ENCODE measurements at regions of chr15 and their contacts with region 1.

Region 1: GRCh38 chr15:25693321-25694237 is 169.5 kb downstream of the ATP10A start:
- DNase-seq: peak; percentile 31 to 46 (median 44)
- ATAC-seq: peak; percentile 91
- H3K4me3 ChIP-seq: no peak overlapping the region
- H3K27ac ChIP-seq: no peak overlapping the region
- H3K4me1 ChIP-seq: no peaks in the 10 kb centered on the region
- H3K27me3 ChIP-seq: peaks cover 0 to 39% of the 10 kb centered on the region in 2 experiments; a peak in 2 of 5 replicates
- CTCF ChIP-seq: peak; percentile 65 to 79 (median 65)
- EP300 ChIP-seq: no peak
- POLR2A ChIP-seq: no peak
- RAD21 ChIP-seq: peak; percentile 33 to 40

Region 2: GRCh38 chr15:25727867-25728600 is 34.5 kb after region 1 on chr15:
- CTCF ChIA-PET with region 1: no interaction called
- POLR2A ChIA-PET with region 1: no interaction called
- in situ Hi-C with region 1: no loop called
- intact Hi-C with region 1: no loop called
- DNase-seq: no peak
- ATAC-seq: no peak
- H3K4me3 ChIP-seq: no peak overlapping the region
- H3K27ac ChIP-seq: no peak overlapping the region
- H3K4me1 ChIP-seq: no peaks in the 10 kb centered on the region
- H3K27me3 ChIP-seq: peaks cover 4 to 22% of the 10 kb centered on the region in 2 experiments; a peak in 4 of 5 replicates
- CTCF ChIP-seq: no peak
- EP300 ChIP-seq: no peak
- POLR2A ChIP-seq: no peak
- RAD21 ChIP-seq: no peak

Region 3: DNA sequence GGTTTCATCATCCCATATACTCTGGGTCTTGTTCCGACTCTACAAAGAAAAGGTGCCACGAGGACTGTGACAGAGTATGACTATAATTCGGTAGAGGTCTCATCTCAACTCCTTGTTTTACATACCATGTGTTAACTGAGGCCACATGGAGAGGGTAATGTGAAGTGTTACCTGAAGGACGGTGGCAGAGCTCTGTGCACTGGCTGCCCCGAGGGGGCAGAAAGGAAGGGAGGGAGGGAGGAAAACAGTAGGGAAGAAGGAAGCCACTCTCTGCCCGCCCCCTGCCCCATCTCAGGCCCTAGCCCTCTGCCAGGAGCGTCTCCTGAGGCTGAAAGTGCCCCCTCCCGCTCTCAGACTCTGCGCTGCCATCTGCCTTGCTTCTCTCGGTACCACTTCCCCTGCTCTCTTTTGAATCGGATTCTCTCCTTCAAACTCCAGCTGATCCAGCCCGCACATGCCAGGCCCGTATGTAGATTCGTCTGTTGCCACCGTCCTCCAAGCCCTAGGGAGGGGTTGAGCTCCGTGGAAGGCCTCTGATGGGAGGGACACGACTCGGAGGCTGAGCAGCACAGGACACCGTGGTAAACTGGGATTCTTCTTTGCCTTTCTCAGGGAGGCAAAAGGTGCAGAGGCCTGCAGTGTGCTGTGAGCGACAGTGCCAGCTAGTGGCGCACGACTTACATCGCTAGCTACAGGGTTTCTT is 240.0 kb after region 1 on chr15:
- CTCF ChIA-PET with region 1: no interaction called
- POLR2A ChIA-PET with region 1: no interaction called
- in situ Hi-C with region 1: no loop called
- intact Hi-C with region 1: loop called (anchors 10 kb)
- DNase-seq: peak in 2 of 4 experiments; percentile 35 to 42
- ATAC-seq: peak; percentile 94
- H3K4me3 ChIP-seq: no peak overlapping the region
- H3K27ac ChIP-seq: no peak overlapping the region
- H3K4me1 ChIP-seq: no peaks in the 10 kb centered on the region
- H3K27me3 ChIP-seq: peaks cover 0 to 10% of the 10 kb centered on the region in 2 experiments; a peak in 3 of 5 replicates
- CTCF ChIP-seq: peak; percentile 57 to 72 (median 60)
- EP300 ChIP-seq: no peak
- POLR2A ChIP-seq: no peak
- RAD21 ChIP-seq: peak; percentile 13 to 34; a peak in 2 of 4 replicates

Region 4: GRCh38 chr15:26095710-26096330 is 402.2 kb after region 1 on chr15:
- CTCF ChIA-PET with region 1: no interaction called
- POLR2A ChIA-PET with region 1: no interaction called
- in situ Hi-C with region 1: no loop called
- intact Hi-C with region 1: no loop called
- DNase-seq: peak in 1 of 4 experiments; percentile 18
- ATAC-seq: peak; percentile 77
- H3K4me3 ChIP-seq: no peak overlapping the region
- H3K27ac ChIP-seq: no peak overlapping the region
- H3K4me1 ChIP-seq: no peaks in the 10 kb centered on the region
- H3K27me3 ChIP-seq: peaks cover 0 to 4% of the 10 kb centered on the region in 2 experiments; a peak in 1 of 5 replicates
- CTCF ChIP-seq: peak; percentile 45 to 55 (median 48); a peak in 5 of 6 replicates
- EP300 ChIP-seq: no peak
- POLR2A ChIP-seq: no peak
- RAD21 ChIP-seq: peak in 1 of 2 experiments; percentile 19; a peak in 1 of 4 replicates